CD14-positive monocyte (primary cell): ENCODE measurements at regions of chrX and their contacts with region 1.

Region 1: DNA sequence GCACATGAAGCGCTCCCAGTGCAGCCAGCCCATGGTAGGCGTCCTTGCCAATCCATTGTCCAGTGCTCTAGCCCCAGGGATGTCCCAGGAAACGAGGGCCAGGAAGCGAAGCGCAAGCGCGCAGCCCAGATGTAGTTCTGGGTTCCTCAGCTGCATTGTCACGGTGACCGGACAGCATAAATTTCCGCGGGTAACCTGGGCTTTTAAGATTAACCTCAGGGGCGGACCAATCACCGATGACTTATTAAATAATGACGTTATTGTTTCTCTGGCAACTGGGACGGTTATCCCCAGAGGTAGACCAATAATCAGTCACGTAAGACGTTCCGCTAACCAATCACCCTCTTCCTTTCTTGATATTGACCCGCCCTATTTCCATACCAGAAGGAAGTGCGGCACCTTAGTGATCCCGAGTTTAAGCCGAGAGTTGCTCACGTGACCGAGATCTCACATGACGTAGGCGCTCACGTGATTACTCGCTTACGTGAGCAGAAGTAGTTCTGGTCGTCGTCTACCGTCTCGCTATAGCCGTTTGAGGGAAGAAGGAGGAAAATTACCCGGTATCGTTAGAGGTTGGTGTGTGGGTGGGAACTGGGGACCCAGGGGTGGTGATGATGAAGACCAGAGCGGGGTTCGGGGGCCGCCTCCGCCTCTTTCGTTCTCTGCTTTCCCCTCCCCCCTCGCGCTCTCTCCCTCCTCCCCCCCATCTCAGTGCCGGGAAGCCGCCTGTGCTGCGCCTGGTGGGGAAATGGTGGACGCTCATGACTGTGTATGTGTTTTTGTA is at the starts of genes GLA and HNRNPH2:
- DNase-seq: peak; percentile 96 to 98 (median 96)
- H3K4me3 ChIP-seq: peak within 1 kb of the TSS; percentile 84 to 96 (median 89)
- H3K4me3 Mint-ChIP-seq: peak within 1 kb of the TSS; percentile 97 to 98
- H3K27ac ChIP-seq: peak within 1 kb of the TSS; percentile 93 to 99
- H3K27ac Mint-ChIP-seq: peak within 1 kb of the TSS; percentile 96 to 99 (median 99)
- H3K4me1 ChIP-seq: peaks cover 32 to 45% of the 10 kb centered on the region in 2 donors
- H3K4me1 Mint-ChIP-seq: peaks cover 29% of the 10 kb centered on the region
- H3K27me3 ChIP-seq: no peaks in the 10 kb centered on the region
- H3K27me3 Mint-ChIP-seq: no peaks in the 10 kb centered on the region
- CTCF ChIP-seq: no peak
- polyA plus RNA-seq, gene GLA: 64.0 to 101 (median 80.0) TPM
- polyA plus RNA-seq, gene HNRNPH2: 27.7 to 163 (median 118) TPM

Region 2: GRCh38 chrX:101393530-101394305 is 14.2 kb before region 1 on chrX:
- intact Hi-C with region 1: loop called in 1 of 2 experiments (anchors 2 kb)
- DNase-seq: no peak
- H3K4me3 ChIP-seq: no peak overlapping the region
- H3K4me3 Mint-ChIP-seq: no peak overlapping the region
- H3K27ac ChIP-seq: no peak overlapping the region
- H3K27ac Mint-ChIP-seq: peak overlapping the region in 3 of 7 donors; percentile 31 to 67 (median 41)
- H3K4me1 ChIP-seq: peaks cover 23 to 40% of the 10 kb centered on the region in 2 donors
- H3K4me1 Mint-ChIP-seq: peaks cover 26% of the 10 kb centered on the region
- H3K27me3 ChIP-seq: no peaks in the 10 kb centered on the region
- H3K27me3 Mint-ChIP-seq: peaks cover 0 to 3% (median 0%) of the 10 kb centered on the region in 3 donors
- CTCF ChIP-seq: no peak

Region 3: GRCh38 chrX:101931488-101932248 is 523.7 kb after region 1 on chrX and contains the start of gene ZMAT1:
- intact Hi-C with region 1: loop called in 1 of 2 experiments (anchors 10 kb)
- DNase-seq: peak; percentile 93 to 95 (median 94)
- H3K4me3 ChIP-seq: peak within 1 kb of the TSS; percentile 46 to 71 (median 57)
- H3K4me3 Mint-ChIP-seq: peak within 1 kb of the TSS; percentile 82 to 91
- H3K27ac ChIP-seq: peak within 1 kb of the TSS; percentile 68 to 70
- H3K27ac Mint-ChIP-seq: peak within 1 kb of the TSS; percentile 75 to 93 (median 86)
- H3K4me1 ChIP-seq: peaks cover 0 to 9% of the 10 kb centered on the region in 2 donors
- H3K4me1 Mint-ChIP-seq: peaks cover 6% of the 10 kb centered on the region
- H3K27me3 ChIP-seq: no peaks in the 10 kb centered on the region
- H3K27me3 Mint-ChIP-seq: peaks cover 0 to 4% (median 2%) of the 10 kb centered on the region in 3 donors
- CTCF ChIP-seq: no peak
- polyA plus RNA-seq, gene ZMAT1: 0.56 to 10.5 (median 0.65) TPM